ENCODE measurements at regions of chr13 and their contacts with region 1.

Region 1: GRCh38 chr13:75694722-75695121 is 58.6 kb downstream of the LMO7 start:
- DNase-seq: no peak
- ATAC-seq: no peak
- H3K4me3 ChIP-seq: no peak overlapping the region
- H3K27ac ChIP-seq: no peak overlapping the region
- H3K4me1 ChIP-seq: no peaks in the 10 kb centered on the region
- H3K27me3 ChIP-seq: no peaks in the 10 kb centered on the region
- CTCF ChIP-seq: no peak

Region 2: DNA sequence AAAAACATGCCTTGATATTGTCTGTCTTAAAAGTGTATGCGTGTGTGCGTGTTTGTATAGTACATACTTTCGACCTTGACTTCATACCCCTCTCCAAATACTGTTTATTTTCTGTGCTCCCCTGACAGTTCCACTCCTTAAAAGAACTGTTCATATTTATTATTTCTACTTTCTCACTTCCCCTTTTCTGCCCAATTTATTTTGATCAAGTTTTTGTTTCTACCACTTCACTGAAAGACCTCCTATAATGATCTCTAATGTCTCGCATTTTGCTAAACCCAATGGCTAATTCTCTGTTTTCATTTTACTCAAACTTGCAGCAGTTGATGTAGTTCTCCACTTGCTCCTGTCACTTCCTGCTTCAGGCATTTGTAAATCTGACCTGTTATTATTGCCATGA is 1134.4 kb before region 1 on chr13:
- intact Hi-C with region 1: no loop called
- DNase-seq: no peak
- ATAC-seq: no peak
- H3K4me3 ChIP-seq: no peak overlapping the region
- H3K27ac ChIP-seq: no peak overlapping the region
- H3K4me1 ChIP-seq: no peaks in the 10 kb centered on the region
- H3K27me3 ChIP-seq: no peaks in the 10 kb centered on the region
- CTCF ChIP-seq: no peak

Region 3: GRCh38 chr13:75760131-75761021 is 65.7 kb after region 1 on chr13:
- intact Hi-C with region 1: loop called in 1 of 2 experiments (anchors 2 kb)
- DNase-seq: peak in 1 of 2 donors; percentile 48
- ATAC-seq: peak; percentile 88 to 93 (median 89)
- H3K4me3 ChIP-seq: peak overlapping the region; percentile 69
- H3K27ac ChIP-seq: peak overlapping the region; percentile 89
- H3K4me1 ChIP-seq: peaks cover 8% of the 10 kb centered on the region
- H3K27me3 ChIP-seq: no peaks in the 10 kb centered on the region
- CTCF ChIP-seq: peak; percentile 28

Region 4: DNA sequence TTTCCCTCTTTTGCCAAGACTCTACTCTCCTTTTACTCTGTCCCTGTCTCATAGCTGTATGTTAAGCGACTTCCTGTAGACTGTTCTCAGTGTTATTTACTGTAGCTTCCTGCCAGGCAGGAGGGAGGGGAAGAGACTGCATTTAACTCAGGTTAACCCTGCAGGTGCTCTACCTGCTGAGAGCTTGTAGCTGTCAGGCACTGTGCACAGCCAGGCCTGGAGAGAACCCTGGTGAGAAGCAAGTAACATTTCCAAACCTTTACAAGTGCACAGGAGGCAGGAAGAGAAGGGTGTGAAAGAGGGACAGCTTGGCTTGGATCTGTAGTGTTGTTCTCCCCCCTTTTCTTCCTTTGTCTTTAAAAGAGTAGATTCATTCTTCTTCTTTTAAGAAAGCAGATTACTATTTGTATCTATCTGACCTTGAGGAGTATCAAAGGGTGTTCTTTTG is 108.5 kb after region 1 on chr13:
- intact Hi-C with region 1: loop called in 1 of 2 experiments (anchors 5 kb)
- DNase-seq: no peak
- ATAC-seq: peak in 2 of 4 donors; percentile 12 to 16
- H3K4me3 ChIP-seq: no peak overlapping the region
- H3K27ac ChIP-seq: peak overlapping the region; percentile 62
- H3K4me1 ChIP-seq: peaks cover 19% of the 10 kb centered on the region
- H3K27me3 ChIP-seq: no peaks in the 10 kb centered on the region
- CTCF ChIP-seq: no peak

Region 5: GRCh38 chr13:75812751-75813181 is 118.0 kb after region 1 on chr13:
- intact Hi-C with region 1: loop called in 1 of 2 experiments (anchors 5 kb)
- DNase-seq: no peak
- ATAC-seq: peak in 2 of 4 donors; percentile 12 to 19
- H3K4me3 ChIP-seq: no peak overlapping the region
- H3K27ac ChIP-seq: no peak overlapping the region
- H3K4me1 ChIP-seq: peaks cover 36% of the 10 kb centered on the region
- H3K27me3 ChIP-seq: no peaks in the 10 kb centered on the region
- CTCF ChIP-seq: no peak

Region 6: DNA sequence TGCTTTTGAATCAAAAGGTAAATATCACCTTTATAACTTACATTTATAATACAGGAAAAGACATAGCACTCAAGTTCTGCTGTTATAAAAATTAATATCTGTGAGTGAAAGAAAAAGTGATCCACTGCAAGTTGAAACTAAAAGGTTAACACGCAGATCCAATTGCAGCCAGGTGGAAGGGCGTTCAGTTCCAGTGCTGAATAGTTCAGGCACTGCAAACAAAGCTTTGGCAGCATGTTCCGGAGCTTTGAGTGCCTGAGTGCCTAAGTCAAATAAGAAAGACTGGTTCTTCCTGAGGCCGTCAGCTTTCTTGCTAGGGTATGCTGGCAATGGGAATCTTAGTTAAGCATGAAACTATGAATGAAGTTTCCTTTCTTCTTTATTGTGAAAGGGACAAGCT is 141.7 kb after region 1 on chr13:
- intact Hi-C with region 1: loop called in 1 of 2 experiments (anchors 5 kb)
- DNase-seq: no peak
- ATAC-seq: peak in 2 of 4 donors; percentile 70 to 74
- H3K4me3 ChIP-seq: no peak overlapping the region
- H3K27ac ChIP-seq: peak overlapping the region; percentile 25
- H3K4me1 ChIP-seq: peaks cover 26% of the 10 kb centered on the region
- H3K27me3 ChIP-seq: no peaks in the 10 kb centered on the region
- CTCF ChIP-seq: no peak

Region 7: GRCh38 chr13:76903544-76904162 is 1208.9 kb after region 1 on chr13:
- intact Hi-C with region 1: loop called in 1 of 2 experiments (anchors 5 kb)
- DNase-seq: peak in 1 of 2 donors; percentile 39
- ATAC-seq: peak; percentile 64 to 85 (median 72)
- H3K4me3 ChIP-seq: no peak overlapping the region
- H3K27ac ChIP-seq: no peak overlapping the region
- H3K4me1 ChIP-seq: no peaks in the 10 kb centered on the region
- H3K27me3 ChIP-seq: no peaks in the 10 kb centered on the region
- CTCF ChIP-seq: peak; percentile 99